Body of pancreas (tissue), 4 donors: ENCODE measurements at regions of chr5 and their contacts with region 1.

Region 1: DNA sequence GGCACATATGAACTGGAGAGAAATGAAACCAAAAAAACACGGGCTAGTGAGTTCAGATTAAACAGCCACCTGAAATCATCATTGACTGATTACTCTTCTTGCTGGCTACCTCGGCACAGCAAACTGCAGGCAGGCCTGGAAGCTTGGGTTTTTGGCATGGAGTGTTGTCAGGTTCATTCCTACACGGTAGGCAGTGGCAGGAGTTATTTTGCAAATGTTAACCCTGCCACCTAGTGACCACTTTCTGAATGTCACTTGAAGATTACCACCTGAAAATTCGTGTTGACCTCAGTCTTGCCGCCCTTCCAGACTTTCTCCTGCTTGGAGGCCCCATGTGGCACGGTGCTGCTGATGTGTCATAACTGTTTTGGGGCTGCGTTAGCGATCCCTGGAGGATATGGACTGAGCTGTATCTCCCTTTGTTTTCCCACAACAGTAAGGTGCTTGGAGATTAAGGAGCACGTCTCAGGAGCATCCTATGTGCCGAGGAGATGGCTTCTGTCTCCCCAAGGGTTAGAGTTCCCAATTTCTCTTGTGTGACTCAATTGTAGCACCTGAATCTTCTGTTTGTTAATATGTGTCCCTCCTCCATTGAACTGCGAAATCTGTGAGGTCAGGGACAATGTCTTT is 12.7 kb upstream of the CD180 start:
- DNase-seq: peak; percentile 63 to 83 (median 76)
- ATAC-seq: peak; percentile 84
- H3K4me3 ChIP-seq: no peak overlapping the region
- H3K27ac ChIP-seq: no peak overlapping the region
- H3K4me1 ChIP-seq: peaks cover 4% of the 10 kb centered on the region
- H3K27me3 ChIP-seq: no peaks in the 10 kb centered on the region
- CTCF ChIP-seq: peak; percentile 55 to 91 (median 89)
- POLR2A ChIP-seq: no peak

Region 2: DNA sequence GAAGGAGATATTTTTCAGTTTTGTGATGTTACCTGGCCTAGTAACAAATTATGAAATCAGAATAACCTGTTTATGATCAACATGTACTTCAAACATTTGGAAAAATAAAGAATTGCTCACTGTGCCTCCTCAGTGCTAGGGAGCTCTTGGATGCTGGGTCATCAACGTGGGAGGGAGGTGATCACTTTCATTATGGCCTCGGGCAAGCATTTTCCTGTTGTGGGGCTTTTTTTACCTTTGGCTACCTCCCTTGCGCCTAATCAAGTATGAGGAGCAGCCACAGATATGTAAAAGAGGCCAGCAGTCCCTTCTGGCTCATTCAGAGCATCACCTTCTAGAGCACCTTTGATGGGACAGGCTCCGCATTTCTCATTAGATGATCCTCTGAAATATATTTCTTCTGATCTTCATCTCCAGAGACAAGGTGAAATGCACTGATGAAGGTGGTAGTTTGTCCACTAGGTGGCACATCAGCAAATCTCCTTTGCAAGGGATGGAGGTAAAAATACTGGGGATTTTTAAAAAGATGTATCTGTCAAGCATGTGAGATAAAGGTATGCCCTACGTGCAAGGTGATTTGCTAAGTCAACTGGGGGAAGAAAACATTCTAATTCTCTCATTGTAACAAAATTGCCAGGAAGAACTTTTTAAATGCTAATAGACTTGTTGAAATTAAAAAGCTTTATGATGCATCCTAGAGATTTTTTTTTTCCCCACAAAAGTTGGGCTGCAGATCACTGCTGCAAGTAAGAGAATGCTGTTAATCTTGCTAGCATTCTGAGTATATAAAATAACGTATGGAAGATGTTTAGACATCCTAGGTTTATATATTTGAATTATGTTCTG is 394.9 kb before region 1 on chr5:
- intact Hi-C with region 1: loop called (anchors 10 kb)
- DNase-seq: peak; percentile 33 to 43 (median 39)
- ATAC-seq: no peak
- H3K4me3 ChIP-seq: no peak overlapping the region
- H3K27ac ChIP-seq: no peak overlapping the region
- H3K4me1 ChIP-seq: peaks cover 4% of the 10 kb centered on the region
- H3K27me3 ChIP-seq: no peaks in the 10 kb centered on the region
- CTCF ChIP-seq: peak; percentile 36 to 77 (median 62)
- POLR2A ChIP-seq: no peak

Region 3: GRCh38 chr5:66992547-66992946 is 216.7 kb before region 1 on chr5:
- intact Hi-C with region 1: loop called (anchors 10 kb)
- DNase-seq: no peak
- ATAC-seq: no peak
- H3K4me3 ChIP-seq: no peak overlapping the region
- H3K27ac ChIP-seq: no peak overlapping the region
- H3K4me1 ChIP-seq: no peaks in the 10 kb centered on the region
- H3K27me3 ChIP-seq: no peaks in the 10 kb centered on the region
- CTCF ChIP-seq: no peak
- POLR2A ChIP-seq: no peak